ENCODE measurements at regions of chr6 and their contacts with region 1.

Region 1: DNA sequence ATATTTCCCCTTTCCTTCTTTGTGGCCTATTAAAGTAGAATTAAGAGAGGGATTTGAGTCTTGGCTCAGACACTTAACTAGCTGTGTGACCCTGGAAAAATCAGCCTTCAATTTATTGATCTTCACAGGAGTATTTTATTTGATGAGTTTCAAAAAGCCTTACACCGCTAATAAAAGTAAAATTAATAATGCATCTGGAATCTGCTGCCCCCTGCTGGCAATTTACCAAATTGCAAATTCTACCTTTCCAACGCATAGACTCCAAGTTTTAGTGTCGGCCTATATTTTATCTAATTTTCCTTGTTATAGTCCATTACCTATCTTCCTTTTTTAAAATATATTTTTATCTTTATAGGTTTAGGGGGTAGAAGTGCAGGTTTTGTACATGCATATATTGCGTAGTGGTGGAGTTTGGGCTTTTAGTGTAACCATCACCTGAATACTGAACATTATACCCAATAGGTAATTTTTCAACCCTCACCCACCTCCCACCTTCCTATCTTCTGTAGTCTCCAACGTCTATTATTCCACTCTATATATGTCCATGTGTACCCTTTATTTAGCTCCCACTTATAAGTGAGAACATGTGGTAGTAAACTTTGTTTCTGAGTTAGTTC is 46.3 kb downstream of the GOPC start:
- DNase-seq: peak; percentile 69
- ATAC-seq: no peak
- H3K4me3 Mint-ChIP-seq: no peak overlapping the region
- H3K27ac Mint-ChIP-seq: no peak overlapping the region
- H3K4me1 Mint-ChIP-seq: peaks cover under 1% of the 10 kb centered on the region
- H3K27me3 Mint-ChIP-seq: no peaks in the 10 kb centered on the region

Region 2: GRCh38 chr6:117233145-117233544 is 322.8 kb before region 1 on chr6:
- CTCF ChIA-PET with region 1: no interaction called
- POLR2A ChIA-PET with region 1: no interaction called
- intact Hi-C with region 1: no loop called
- DNase-seq: no peak
- ATAC-seq: no peak
- H3K4me3 Mint-ChIP-seq: no peak overlapping the region
- H3K27ac Mint-ChIP-seq: no peak overlapping the region
- H3K4me1 Mint-ChIP-seq: no peaks in the 10 kb centered on the region
- H3K27me3 Mint-ChIP-seq: peaks cover 2% of the 10 kb centered on the region

Region 3: GRCh38 chr6:117399924-117400323 is 156.1 kb before region 1 on chr6:
- CTCF ChIA-PET with region 1: no interaction called
- POLR2A ChIA-PET with region 1: no interaction called
- intact Hi-C with region 1: loop called in 1 of 2 experiments (anchors 5 kb)
- DNase-seq: no peak
- ATAC-seq: no peak
- H3K4me3 Mint-ChIP-seq: no peak overlapping the region
- H3K27ac Mint-ChIP-seq: no peak overlapping the region
- H3K4me1 Mint-ChIP-seq: no peaks in the 10 kb centered on the region
- H3K27me3 Mint-ChIP-seq: no peaks in the 10 kb centered on the region

Region 4: DNA sequence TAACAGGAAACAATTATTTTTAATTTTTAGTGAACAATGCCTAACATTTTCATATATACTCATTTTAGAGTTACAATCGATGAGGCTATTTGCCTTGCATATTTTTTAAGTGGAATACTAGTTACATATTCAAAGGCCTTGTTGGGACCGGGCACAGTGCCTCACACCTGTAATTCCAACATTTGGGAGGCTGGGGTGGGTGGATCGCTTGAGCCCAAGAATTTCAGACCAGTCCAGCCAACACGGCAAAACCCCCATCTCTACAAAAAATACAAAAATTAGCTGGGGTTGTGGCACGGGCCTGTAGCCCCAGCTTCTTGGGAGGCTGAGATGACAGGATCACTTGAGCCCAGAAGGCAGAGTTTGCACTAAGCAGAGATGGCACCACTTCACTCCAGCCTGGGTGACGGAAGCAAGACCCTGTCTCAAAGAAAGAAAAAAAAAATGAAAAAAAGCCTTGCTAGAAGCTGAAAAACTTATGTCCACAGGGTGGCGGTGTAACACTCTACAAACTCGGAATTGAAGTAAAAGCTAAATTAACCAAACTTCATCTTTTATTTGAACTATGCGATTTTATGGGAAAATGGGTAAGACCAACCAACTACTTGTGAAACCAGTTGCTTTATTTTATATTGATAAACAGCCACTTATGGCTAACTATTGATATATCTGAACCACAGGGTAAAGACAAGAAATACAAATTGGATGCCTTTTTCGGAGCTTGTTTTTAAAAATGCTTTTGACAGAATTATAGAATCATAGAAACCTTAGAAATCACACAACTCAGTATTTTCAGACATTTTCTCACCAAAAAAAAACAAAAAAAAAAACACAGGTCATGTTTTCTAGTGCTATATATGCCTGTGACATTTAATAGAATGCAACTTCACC is 106.2 kb before region 1 on chr6:
- CTCF ChIA-PET with region 1: interaction called, 75 read pairs
- POLR2A ChIA-PET with region 1: no interaction called
- intact Hi-C with region 1: loop called (anchors 1 kb)
- DNase-seq: peak; percentile 72
- ATAC-seq: no peak
- H3K4me3 Mint-ChIP-seq: no peak overlapping the region
- H3K27ac Mint-ChIP-seq: no peak overlapping the region
- H3K4me1 Mint-ChIP-seq: no peaks in the 10 kb centered on the region
- H3K27me3 Mint-ChIP-seq: peaks cover 12% of the 10 kb centered on the region

Region 5: GRCh38 chr6:117687021-117687648 is 131.1 kb after region 1 on chr6:
- CTCF ChIA-PET with region 1: no interaction called
- POLR2A ChIA-PET with region 1: no interaction called
- intact Hi-C with region 1: no loop called
- DNase-seq: no peak
- ATAC-seq: no peak
- H3K4me3 Mint-ChIP-seq: no peak overlapping the region
- H3K27ac Mint-ChIP-seq: peak overlapping the region; percentile 20
- H3K4me1 Mint-ChIP-seq: peaks cover 51% of the 10 kb centered on the region
- H3K27me3 Mint-ChIP-seq: no peaks in the 10 kb centered on the region

Measured in activated CD4-positive, alpha-beta T cell treated with anti-CD3 and anti-CD28 coated beads for 36 hours (primary cell).